ENCODE measurements at regions of chr12 and their contacts with region 1.

Region 1: DNA sequence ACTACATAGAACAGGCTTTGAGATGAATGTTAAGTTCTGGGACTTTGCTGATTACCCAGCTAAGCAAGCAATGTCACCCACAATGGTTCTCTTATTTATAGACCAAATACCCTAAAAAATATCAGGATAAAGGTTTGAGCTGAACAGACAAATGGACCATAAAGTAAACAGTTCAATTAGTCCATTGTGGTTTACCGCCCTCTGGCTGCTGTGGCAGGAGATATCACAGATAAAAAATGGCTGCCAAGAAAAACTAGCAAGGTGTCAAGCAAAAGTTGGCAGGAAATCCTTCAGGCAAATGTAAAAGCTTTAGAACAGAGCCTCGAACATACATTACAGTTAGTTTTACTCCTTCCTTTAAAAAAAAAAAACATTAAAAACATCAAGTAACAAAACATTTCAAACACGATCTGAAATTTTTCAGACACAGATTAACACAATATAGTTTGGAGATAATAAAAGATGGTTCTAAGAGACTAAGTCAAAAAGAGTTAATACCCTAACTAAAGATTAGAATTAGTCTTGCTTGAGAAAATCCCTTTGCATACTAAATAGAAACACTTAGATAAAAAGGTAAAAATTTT is 41.3 kb downstream of the MED13L start:
- DNase-seq: peak in 1 of 2 donors; percentile 46
- ATAC-seq: peak in 6 of 8 donors; percentile 56 to 84 (median 70)
- H3K4me3 ChIP-seq: no peak overlapping the region
- H3K27ac ChIP-seq: peak overlapping the region in 2 of 10 donors; percentile 11 to 31
- H3K4me1 ChIP-seq: peaks cover 0 to 62% (median 55%) of the 10 kb centered on the region in 9 donors
- H3K27me3 ChIP-seq: no peaks in the 10 kb centered on the region
- CTCF ChIP-seq: peak; percentile 50 to 86 (median 71)

Region 2: GRCh38 chr12:115998119-115998633 is 238.1 kb before region 1 on chr12:
- intact Hi-C with region 1: loop called in 1 of 10 experiments (anchors 5 kb)
- DNase-seq: no peak
- ATAC-seq: peak in 5 of 8 donors; percentile 26 to 56 (median 46)
- H3K4me3 ChIP-seq: no peak overlapping the region
- H3K27ac ChIP-seq: no peak overlapping the region
- H3K4me1 ChIP-seq: peaks cover 0 to 9% (median 4%) of the 10 kb centered on the region in 9 donors
- H3K27me3 ChIP-seq: no peaks in the 10 kb centered on the region
- CTCF ChIP-seq: peak; percentile 79 to 91 (median 87)

Region 3: DNA sequence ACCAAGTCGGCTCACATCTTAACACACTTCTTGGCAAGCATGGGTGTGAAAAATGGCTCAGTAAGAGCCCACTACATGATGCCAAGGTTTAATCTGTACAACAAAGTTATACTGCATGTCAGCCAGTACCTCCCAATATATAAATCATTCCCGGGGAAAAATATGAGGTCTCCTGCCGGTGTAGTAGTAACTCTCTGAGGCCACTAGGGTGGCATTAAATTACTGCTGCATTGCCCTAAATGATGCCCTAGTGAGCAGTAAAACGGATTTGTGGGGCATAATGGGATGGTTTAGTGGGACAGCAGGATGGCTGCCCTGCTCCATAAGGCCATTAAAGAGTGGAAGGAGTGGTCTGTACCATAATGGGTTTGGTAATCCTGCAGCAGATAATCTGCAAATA is 226.4 kb before region 1 on chr12:
- intact Hi-C with region 1: loop called in 8 of 10 experiments (anchors 2 to 10 kb)
- DNase-seq: no peak
- ATAC-seq: no peak
- H3K4me3 ChIP-seq: no peak overlapping the region
- H3K27ac ChIP-seq: no peak overlapping the region
- H3K4me1 ChIP-seq: peaks cover 0 to 4% (median 0%) of the 10 kb centered on the region in 9 donors
- H3K27me3 ChIP-seq: no peaks in the 10 kb centered on the region
- CTCF ChIP-seq: peak in 2 of 9 donors; percentile 18 to 31

Region 4: DNA sequence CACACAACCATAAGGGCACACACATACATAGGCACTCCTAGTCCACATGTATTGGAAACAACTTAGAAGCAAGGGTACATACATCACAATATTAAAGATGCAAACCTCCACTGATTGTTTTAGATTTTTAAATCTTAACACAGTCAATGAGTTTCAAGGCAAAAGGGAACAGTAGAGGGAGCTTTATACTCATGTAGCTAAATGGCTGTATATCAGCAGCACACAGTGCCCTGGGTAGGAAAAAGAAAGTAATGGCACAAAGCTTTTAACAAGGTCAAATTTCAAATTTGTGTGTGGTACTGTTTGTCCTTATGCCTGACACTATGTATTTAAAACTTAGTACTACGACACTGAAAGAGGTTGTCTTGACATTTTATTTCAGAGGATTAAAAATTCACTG is 220.7 kb before region 1 on chr12:
- intact Hi-C with region 1: loop called (anchors 2 to 10 kb)
- DNase-seq: no peak
- ATAC-seq: peak in 7 of 8 donors; percentile 47 to 88 (median 81)
- H3K4me3 ChIP-seq: no peak overlapping the region
- H3K27ac ChIP-seq: no peak overlapping the region
- H3K4me1 ChIP-seq: peaks cover 0 to 39% (median 11%) of the 10 kb centered on the region in 9 donors
- H3K27me3 ChIP-seq: no peaks in the 10 kb centered on the region
- CTCF ChIP-seq: peak; percentile 20 to 82 (median 60)

Region 5: GRCh38 chr12:116066381-116067230 is 169.6 kb before region 1 on chr12:
- intact Hi-C with region 1: loop called in 2 of 10 experiments (anchors 5 to 10 kb)
- DNase-seq: peak; percentile 17 to 24
- ATAC-seq: no peak
- H3K4me3 ChIP-seq: no peak overlapping the region
- H3K27ac ChIP-seq: no peak overlapping the region
- H3K4me1 ChIP-seq: peaks cover 2 to 73% (median 52%) of the 10 kb centered on the region in 9 donors
- H3K27me3 ChIP-seq: no peaks in the 10 kb centered on the region
- CTCF ChIP-seq: peak; percentile 39 to 73 (median 57)

Region 6: DNA sequence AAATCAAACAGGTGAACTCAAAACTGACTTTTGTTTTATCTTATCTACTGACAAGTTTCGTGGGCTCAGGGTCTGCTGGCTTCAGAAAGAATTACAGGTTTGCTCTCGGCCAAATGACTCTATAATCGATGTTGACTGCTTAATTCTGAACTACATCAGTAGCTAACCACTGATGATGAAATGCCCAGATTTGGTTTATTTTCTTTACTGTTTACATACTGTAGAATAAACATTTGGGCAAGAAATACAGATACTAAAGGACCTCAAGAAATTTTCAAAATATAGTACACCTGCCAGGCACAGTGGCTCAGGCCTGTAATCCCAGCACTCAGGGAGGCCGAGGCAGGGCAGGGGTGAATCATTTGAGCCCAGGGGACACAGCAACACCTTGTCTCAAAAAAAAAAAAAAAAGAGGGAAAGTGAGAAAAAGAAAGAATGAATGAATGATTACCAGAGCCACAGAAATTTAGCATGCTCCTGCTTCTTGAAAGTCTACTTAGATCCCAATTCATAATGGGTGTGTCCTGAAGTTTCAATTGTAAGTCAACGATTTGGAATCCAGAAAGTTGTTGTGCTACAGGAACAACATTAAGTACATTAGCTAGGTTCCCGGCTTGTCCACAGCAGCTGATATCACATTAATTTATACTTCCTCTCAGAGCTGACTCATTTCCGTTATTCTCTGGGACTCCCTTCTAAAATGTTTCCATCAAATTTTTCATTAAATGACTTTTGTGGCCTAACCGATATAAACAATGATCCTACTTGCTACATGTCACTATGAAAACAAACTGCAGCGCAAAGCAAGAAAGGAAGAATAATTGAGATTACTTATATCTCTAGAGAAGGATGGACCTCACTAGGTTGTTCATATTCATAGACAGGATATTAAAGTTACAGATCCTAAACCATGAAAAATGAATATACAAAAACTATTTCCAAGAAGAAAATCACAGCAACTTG is 93.0 kb before region 1 on chr12:
- intact Hi-C with region 1: loop called in 4 of 10 experiments (anchors 5 to 10 kb)
- DNase-seq: no peak
- ATAC-seq: peak in 3 of 8 donors; percentile 21 to 43 (median 40)
- H3K4me3 ChIP-seq: no peak overlapping the region
- H3K27ac ChIP-seq: peak overlapping the region in 8 of 10 donors; percentile 5 to 59 (median 34)
- H3K4me1 ChIP-seq: peaks cover 0 to 89% (median 66%) of the 10 kb centered on the region in 9 donors
- H3K27me3 ChIP-seq: no peaks in the 10 kb centered on the region
- CTCF ChIP-seq: no peak

Region 7: GRCh38 chr12:116277393-116278278 is 41.4 kb after region 1 on chr12 and contains the start of gene MED13L:
- intact Hi-C with region 1: loop called in 1 of 10 experiments (anchors 5 kb)
- DNase-seq: peak; percentile 87 to 91
- ATAC-seq: peak; percentile 90 to 96 (median 94)
- H3K4me3 ChIP-seq: peak within 1 kb of the TSS; percentile 77 to 96 (median 88)
- H3K27ac ChIP-seq: peak within 1 kb of the TSS; percentile 89 to 100 (median 95)
- H3K4me1 ChIP-seq: peaks cover 0 to 56% (median 29%) of the 10 kb centered on the region in 9 donors
- H3K27me3 ChIP-seq: no peaks in the 10 kb centered on the region
- CTCF ChIP-seq: peak in 7 of 9 donors; percentile 15 to 73 (median 52)
- total RNA-seq, gene MED13L: 53.8 to 76.5 (median 67.0) TPM

Measured in heart right ventricle (tissue), 16 donors.